Activated naive CD4-positive, alpha-beta T cell treated with anti-CD3 and anti-CD28 coated beads, Interleukin-2, amount 10 ng/mL, durations not matched to agents 7 days and 5 days (primary cell): ENCODE measurements at regions of chr20 and their contacts with region 1.

Region 1: GRCh38 chr20:45971675-45972499 is at the start of gene ZNF335:
- DNase-seq: peak; percentile 93
- H3K4me3 Mint-ChIP-seq: peak within 1 kb of the TSS; percentile 87
- H3K27ac Mint-ChIP-seq: peak within 1 kb of the TSS; percentile 100
- H3K4me1 Mint-ChIP-seq: peaks cover 26% of the 10 kb centered on the region
- H3K27me3 Mint-ChIP-seq: peaks cover 25% of the 10 kb centered on the region

Region 2: GRCh38 chr20:45798935-45799642 is 172.8 kb before region 1 on chr20:
- CTCF ChIA-PET with region 1: interaction called, 15 read pairs
- DNase-seq: peak; percentile 81
- H3K4me3 Mint-ChIP-seq: no peak overlapping the region
- H3K27ac Mint-ChIP-seq: peak overlapping the region; percentile 46
- H3K4me1 Mint-ChIP-seq: peaks cover 8% of the 10 kb centered on the region
- H3K27me3 Mint-ChIP-seq: no peaks in the 10 kb centered on the region

Region 3: DNA sequence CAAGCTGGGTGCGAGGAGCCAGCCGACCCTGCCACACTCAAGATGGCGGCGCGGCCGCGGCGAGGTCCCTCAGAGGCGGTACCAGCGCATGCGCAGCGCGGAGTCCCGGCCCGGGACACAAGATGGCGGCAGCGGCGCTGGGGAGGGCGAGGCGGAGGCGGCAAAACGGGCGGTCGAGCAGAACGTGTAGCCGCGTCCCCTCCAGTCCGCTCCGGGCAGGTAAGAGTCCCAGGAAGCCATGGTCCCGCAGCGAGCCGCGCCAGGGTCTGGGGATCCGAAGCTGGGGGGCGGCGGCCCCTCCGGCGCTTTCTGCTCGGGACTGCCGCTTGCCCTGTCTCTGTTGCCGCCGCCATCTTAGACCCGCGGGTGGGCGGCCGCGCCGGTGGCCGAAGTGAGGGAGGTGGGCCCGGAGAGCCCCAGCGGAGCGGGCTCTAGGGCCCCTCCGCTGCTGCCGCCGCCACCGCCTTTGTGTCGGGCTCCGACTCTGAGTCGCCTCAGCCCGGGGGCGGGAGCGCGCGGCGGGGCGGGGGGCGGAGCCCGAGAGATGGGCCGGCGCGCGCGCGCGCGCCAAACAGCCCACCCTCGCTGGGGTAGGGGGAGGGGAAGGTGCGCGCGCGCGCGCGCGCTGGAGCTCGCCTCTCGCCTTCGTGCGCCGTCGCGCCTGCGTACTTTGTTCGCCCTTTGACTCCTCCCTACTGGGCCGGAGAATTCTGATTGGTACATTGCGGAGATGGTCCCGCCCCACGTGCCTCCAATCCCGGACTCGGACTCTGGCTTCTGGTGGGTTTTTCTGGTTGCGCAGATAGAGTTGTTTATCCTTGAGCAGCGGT is 37.1 kb before region 1 on chr20 and contains the start of gene PCIF1:
- CTCF ChIA-PET with region 1: interaction called, 12 read pairs
- DNase-seq: peak; percentile 98
- H3K4me3 Mint-ChIP-seq: peak within 1 kb of the TSS; percentile 99
- H3K27ac Mint-ChIP-seq: peak within 1 kb of the TSS; percentile 97
- H3K4me1 Mint-ChIP-seq: peaks cover 37% of the 10 kb centered on the region
- H3K27me3 Mint-ChIP-seq: no peaks in the 10 kb centered on the region

Region 4: GRCh38 chr20:45953672-45954071 is 18.2 kb before region 1 on chr20:
- CTCF ChIA-PET with region 1: interaction called, 26 read pairs
- DNase-seq: no peak
- H3K4me3 Mint-ChIP-seq: no peak overlapping the region
- H3K27ac Mint-ChIP-seq: peak overlapping the region; percentile 45
- H3K4me1 Mint-ChIP-seq: peaks cover 2% of the 10 kb centered on the region
- H3K27me3 Mint-ChIP-seq: no peaks in the 10 kb centered on the region

Region 5: GRCh38 chr20:46013826-46014516 is 42.1 kb after region 1 on chr20:
- CTCF ChIA-PET with region 1: interaction called, 44 read pairs
- DNase-seq: peak; percentile 75
- H3K4me3 Mint-ChIP-seq: no peak overlapping the region
- H3K27ac Mint-ChIP-seq: no peak overlapping the region
- H3K4me1 Mint-ChIP-seq: peaks cover 54% of the 10 kb centered on the region
- H3K27me3 Mint-ChIP-seq: peaks cover 77% of the 10 kb centered on the region

Region 6: GRCh38 chr20:46093531-46093930 is 121.6 kb after region 1 on chr20:
- CTCF ChIA-PET with region 1: no interaction called
- DNase-seq: no peak
- H3K4me3 Mint-ChIP-seq: no peak overlapping the region
- H3K27ac Mint-ChIP-seq: no peak overlapping the region
- H3K4me1 Mint-ChIP-seq: peaks cover 14% of the 10 kb centered on the region
- H3K27me3 Mint-ChIP-seq: peaks cover 15% of the 10 kb centered on the region